Calu3 (cell line): ENCODE measurements at regions of chr15 and their contacts with region 1.

Region 1: GRCh38 chr15:59104912-59105732 is at the start of gene CCNB2:
- DNase-seq: peak; percentile 90
- H3K4me3 Mint-ChIP-seq: peak within 1 kb of the TSS; percentile 100
- H3K27ac Mint-ChIP-seq: peak within 1 kb of the TSS; percentile 73
- H3K4me1 Mint-ChIP-seq: peaks cover 26% of the 10 kb centered on the region
- H3K27me3 Mint-ChIP-seq: no peaks in the 10 kb centered on the region
- CTCF ChIP-seq: no peak
- total RNA-seq, gene CCNB2: 72.5 and 86.4 TPM in 2 replicates

Region 2: GRCh38 chr15:58770857-58771620 is 334.1 kb before region 1 on chr15 and contains the start of gene MINDY2:
- CTCF ChIA-PET with region 1: no interaction called
- intact Hi-C with region 1: no loop called
- DNase-seq: peak; percentile 99
- H3K4me3 Mint-ChIP-seq: no peak within 1 kb of the TSS
- H3K27ac Mint-ChIP-seq: no peak within 1 kb of the TSS
- H3K4me1 Mint-ChIP-seq: no peaks in the 10 kb centered on the region
- H3K27me3 Mint-ChIP-seq: no peaks in the 10 kb centered on the region
- CTCF ChIP-seq: peak; percentile 53
- total RNA-seq, gene MINDY2: 46.2 and 59.0 TPM in 2 replicates

Region 3: GRCh38 chr15:59278120-59278519 is 173.0 kb after region 1 on chr15:
- CTCF ChIA-PET with region 1: no interaction called
- intact Hi-C with region 1: no loop called
- DNase-seq: no peak
- H3K4me3 Mint-ChIP-seq: no peak overlapping the region
- H3K27ac Mint-ChIP-seq: peak overlapping the region; percentile 100
- H3K4me1 Mint-ChIP-seq: peaks cover 97% of the 10 kb centered on the region
- H3K27me3 Mint-ChIP-seq: no peaks in the 10 kb centered on the region
- CTCF ChIP-seq: no peak

Region 4: DNA sequence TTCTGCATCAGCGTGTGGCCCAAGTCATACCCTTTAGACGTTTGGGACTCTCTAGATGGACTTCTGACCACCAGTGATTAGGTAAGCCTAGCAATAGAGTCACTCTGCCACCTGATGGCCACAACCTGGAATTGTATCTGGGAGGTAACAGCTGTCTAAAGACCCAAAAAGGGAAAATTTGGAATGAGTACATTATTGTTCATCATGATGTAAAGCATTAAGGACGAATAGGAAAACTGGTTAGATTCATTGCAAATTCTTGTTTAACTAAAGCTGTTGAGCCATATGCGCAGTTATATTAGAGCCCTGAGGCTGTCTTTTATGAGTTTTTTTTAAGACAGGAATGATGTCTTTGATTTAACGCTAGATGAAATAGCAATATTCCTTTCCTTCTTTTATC is 396.5 kb after region 1 on chr15:
- CTCF ChIA-PET with region 1: no interaction called
- intact Hi-C with region 1: loop called (anchors 2 kb)
- DNase-seq: peak; percentile 76
- H3K4me3 Mint-ChIP-seq: no peak overlapping the region
- H3K27ac Mint-ChIP-seq: no peak overlapping the region
- H3K4me1 Mint-ChIP-seq: no peaks in the 10 kb centered on the region
- H3K27me3 Mint-ChIP-seq: no peaks in the 10 kb centered on the region
- CTCF ChIP-seq: peak; percentile 84